Esophagus squamous epithelium (tissue), 5 donors: ENCODE measurements at regions of chr10 and their contacts with region 1.

Region 1: GRCh38 chr10:22992075-22992474 is 64.2 kb downstream of the ARMC3 start:
- DNase-seq: no peak
- H3K4me3 ChIP-seq: no peak overlapping the region
- H3K27ac ChIP-seq: no peak overlapping the region
- H3K4me1 ChIP-seq: peaks cover 0 to 5% (median 0%) of the 10 kb centered on the region in 3 donors
- H3K27me3 ChIP-seq: peaks cover 0 to 11% (median 2%) of the 10 kb centered on the region in 4 donors
- CTCF ChIP-seq: no peak
- POLR2A ChIP-seq: no peak

Region 2: DNA sequence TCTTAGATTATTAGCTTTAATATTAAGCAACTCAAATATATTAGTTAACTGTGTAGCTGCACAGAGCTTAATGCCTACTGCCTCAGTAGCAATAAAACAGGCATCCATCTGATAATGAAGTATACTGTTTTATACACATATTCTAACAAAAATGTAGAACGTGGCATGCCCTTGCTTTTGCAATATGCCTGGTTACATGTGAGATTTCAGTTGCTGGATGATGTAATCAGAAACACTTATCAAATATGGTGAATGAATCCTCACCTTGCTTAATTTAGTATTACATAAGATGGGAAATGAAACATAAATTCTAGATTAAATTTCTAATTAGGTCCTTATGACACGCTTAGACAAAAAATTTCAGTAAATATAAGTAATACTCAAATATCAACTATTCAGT is 996.5 kb before region 1 on chr10:
- intact Hi-C with region 1: loop called (anchors 5 kb)
- DNase-seq: no peak
- H3K4me3 ChIP-seq: no peak overlapping the region
- H3K27ac ChIP-seq: peak overlapping the region in 3 of 4 donors; percentile 42 to 51 (median 45)
- H3K4me1 ChIP-seq: peaks cover 0 to 6% (median 3%) of the 10 kb centered on the region in 3 donors
- H3K27me3 ChIP-seq: no peaks in the 10 kb centered on the region
- CTCF ChIP-seq: no peak
- POLR2A ChIP-seq: no peak

Region 3: DNA sequence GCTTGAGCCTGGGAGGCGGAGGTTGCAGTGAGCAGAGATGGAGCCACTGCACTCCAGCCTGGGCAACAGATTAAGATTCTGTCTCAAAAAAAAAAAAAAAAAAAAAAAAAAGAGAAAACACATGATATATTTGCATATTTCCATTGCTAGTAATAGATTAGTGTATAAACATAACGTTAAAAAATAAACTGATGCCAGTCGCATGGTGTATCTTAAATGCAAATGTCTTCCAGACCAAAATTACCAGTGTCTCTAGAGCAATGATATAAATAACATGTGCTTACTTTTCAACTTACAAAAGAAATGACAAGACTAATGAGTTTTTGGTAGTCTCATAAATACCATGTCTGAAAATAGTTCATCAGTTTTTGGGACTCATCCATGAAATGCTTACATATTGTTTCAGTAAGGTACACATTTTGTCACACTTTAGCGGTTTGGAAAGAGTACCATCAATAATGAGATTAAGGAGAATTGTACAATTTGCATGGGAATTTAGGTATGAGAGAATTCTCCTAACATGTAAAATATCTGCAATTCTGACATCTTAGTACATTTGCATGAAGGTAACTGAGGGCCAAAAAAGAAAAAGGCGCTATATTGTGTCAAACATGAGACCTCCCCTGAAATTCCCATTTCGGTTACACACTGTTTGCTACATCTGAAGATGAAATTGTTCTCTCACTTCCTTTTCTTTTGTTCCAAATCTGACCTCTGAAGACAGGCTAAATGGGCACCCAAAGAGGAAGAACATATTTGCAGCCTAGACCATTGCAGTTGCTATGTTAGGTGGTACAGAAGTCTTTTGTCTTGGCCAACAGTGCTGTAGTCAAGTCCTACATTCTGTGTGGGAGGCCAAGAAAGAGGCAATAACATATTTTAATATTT is 226.2 kb before region 1 on chr10:
- intact Hi-C with region 1: no loop called
- DNase-seq: no peak
- H3K4me3 ChIP-seq: no peak overlapping the region
- H3K27ac ChIP-seq: peak overlapping the region in 1 of 4 donors; percentile 57
- H3K4me1 ChIP-seq: peaks cover 0 to 30% (median 21%) of the 10 kb centered on the region in 3 donors
- H3K27me3 ChIP-seq: no peaks in the 10 kb centered on the region
- CTCF ChIP-seq: no peak
- POLR2A ChIP-seq: no peak

Region 4: DNA sequence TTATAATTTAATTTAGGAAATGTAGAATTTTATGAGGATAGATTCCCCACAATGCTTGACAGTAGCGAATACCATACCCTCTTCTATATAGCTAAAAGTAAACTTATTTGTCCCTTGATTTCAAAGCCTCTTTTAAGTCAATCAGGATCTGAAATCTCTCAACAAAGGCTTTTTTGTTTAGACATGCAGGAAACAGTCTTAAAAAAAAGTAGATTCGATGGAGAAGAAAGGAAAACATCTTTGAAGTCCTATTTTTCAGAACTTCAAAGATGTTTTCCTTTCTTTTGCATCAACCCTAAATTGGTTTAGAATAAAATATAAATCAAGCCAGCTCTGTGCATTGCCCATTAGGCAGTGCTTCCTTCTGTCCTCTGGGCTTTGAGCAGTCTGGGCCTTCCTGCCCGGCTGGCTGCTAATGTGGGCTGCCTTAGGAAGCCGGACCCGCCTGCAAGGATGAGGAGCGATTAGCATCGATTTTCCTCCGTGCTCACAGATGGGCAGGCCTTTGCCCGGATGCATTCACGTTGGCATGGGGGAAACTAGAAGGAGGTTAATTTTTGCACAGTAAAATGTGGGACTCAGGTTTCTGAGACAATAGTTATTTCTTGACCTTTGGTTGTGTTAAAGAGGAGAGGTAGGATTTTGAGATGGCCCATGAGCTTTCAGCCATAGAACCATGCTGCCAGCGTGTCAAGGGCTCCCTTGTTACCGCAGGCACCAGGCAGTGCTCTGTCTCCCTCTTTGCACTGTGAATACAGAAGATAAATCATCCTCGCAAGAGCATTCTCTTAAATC is 118.8 kb after region 1 on chr10:
- intact Hi-C with region 1: no loop called
- DNase-seq: no peak
- H3K4me3 ChIP-seq: no peak overlapping the region
- H3K27ac ChIP-seq: no peak overlapping the region
- H3K4me1 ChIP-seq: no peaks in the 10 kb centered on the region
- H3K27me3 ChIP-seq: no peaks in the 10 kb centered on the region
- CTCF ChIP-seq: no peak
- POLR2A ChIP-seq: no peak